ENCODE measurements at regions of chr5 and their contacts with region 1.

Region 1: GRCh38 chr5:145260670-145261069 is 574.5 kb downstream of the PRELID2 start:
- DNase-seq: no peak
- H3K4me3 Mint-ChIP-seq: no peak overlapping the region
- H3K27ac Mint-ChIP-seq: no peak overlapping the region
- H3K4me1 Mint-ChIP-seq: no peaks in the 10 kb centered on the region
- H3K27me3 Mint-ChIP-seq: no peaks in the 10 kb centered on the region
- CTCF ChIP-seq: no peak

Region 2: GRCh38 chr5:145056805-145057204 is 203.9 kb before region 1 on chr5:
- CTCF ChIA-PET with region 1: interaction called, 11 read pairs
- intact Hi-C with region 1: no loop called
- DNase-seq: no peak
- H3K4me3 Mint-ChIP-seq: no peak overlapping the region
- H3K27ac Mint-ChIP-seq: no peak overlapping the region
- H3K4me1 Mint-ChIP-seq: no peaks in the 10 kb centered on the region
- H3K27me3 Mint-ChIP-seq: no peaks in the 10 kb centered on the region
- CTCF ChIP-seq: no peak

Measured in Calu3 (cell line).